Endothelial cell of umbilical vein (primary cell): ENCODE measurements at regions of chr7 and their contacts with region 1.

Region 1: GRCh38 chr7:11831736-11832495 is at the start of gene THSD7A:
- DNase-seq: peak; percentile 81
- H3K4me3 ChIP-seq: peak within 1 kb of the TSS; percentile 55 to 89 (median 66)
- H3K27ac ChIP-seq: peak within 1 kb of the TSS; percentile 84
- H3K4me1 ChIP-seq: peaks cover 12% of the 10 kb centered on the region
- H3K27me3 ChIP-seq: no peaks in the 10 kb centered on the region
- CTCF ChIP-seq: peak in 1 of 2 donors; percentile 7
- POLR2A ChIP-seq: no peak
- total RNA-seq, gene THSD7A: 12.7 and 15.2 TPM in 2 replicates

Region 2: DNA sequence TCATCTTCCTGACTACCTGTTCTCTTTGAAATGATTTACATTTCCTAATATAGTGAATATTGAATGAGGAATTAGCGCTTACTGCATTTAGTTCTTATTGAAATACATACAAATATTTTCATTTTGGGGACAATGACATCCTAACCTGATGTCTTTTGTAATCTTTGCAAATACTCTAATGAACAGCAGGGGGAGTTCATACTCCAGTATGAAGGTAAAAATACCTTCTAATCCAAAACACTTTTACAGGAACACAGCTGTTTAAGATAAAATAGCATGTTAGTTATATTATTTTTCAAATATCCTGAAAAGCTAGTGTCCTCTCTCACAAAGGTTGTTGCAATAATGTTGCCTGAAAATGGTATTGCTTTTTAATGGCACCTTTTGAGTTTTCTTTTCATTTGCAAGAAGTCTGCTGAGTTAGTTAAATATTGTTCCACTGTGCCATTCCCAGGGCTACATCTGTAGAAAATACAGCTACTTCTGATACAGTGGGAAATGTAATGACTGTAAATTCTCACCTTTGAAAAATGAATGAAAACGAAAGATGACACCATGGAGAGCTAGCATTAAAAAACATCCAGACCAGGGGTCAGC is 458.3 kb before region 1 on chr7:
- CTCF ChIA-PET with region 1: interaction called, 11 read pairs
- POLR2A ChIA-PET with region 1: no interaction called
- dilution Hi-C with region 1: no loop called
- intact Hi-C with region 1: loop called (anchors 1 kb)
- DNase-seq: peak; percentile 38
- H3K4me3 ChIP-seq: no peak overlapping the region
- H3K27ac ChIP-seq: no peak overlapping the region
- H3K4me1 ChIP-seq: no peaks in the 10 kb centered on the region
- H3K27me3 ChIP-seq: no peaks in the 10 kb centered on the region
- CTCF ChIP-seq: peak; percentile 16 to 29
- POLR2A ChIP-seq: no peak

Region 3: DNA sequence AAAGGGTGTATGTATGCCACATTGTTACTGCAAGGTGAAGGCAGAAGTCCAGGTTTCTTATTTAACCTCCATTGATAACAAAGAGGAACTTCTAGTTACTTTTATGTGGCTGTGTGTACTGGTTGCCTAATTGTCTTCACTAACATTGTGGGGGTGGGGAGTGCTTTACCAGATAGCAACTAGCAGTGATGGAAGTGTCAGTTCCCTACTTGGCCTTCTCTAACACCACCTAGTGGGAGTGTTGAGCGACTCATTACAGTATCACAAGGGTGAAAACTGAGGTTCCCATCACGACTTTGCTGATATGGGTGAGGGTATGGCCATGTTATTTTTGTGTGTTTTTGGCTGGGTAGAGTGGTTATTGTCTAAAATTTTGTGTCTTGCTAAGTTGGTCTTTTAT is 274.3 kb before region 1 on chr7:
- CTCF ChIA-PET with region 1: no interaction called
- POLR2A ChIA-PET with region 1: no interaction called
- dilution Hi-C with region 1: no loop called
- intact Hi-C with region 1: loop called (anchors 2 kb)
- DNase-seq: peak; percentile 37
- H3K4me3 ChIP-seq: no peak overlapping the region
- H3K27ac ChIP-seq: no peak overlapping the region
- H3K4me1 ChIP-seq: no peaks in the 10 kb centered on the region
- H3K27me3 ChIP-seq: no peaks in the 10 kb centered on the region
- CTCF ChIP-seq: peak; percentile 31 to 41
- POLR2A ChIP-seq: no peak

Region 4: GRCh38 chr7:11625669-11626068 is 206.2 kb before region 1 on chr7:
- CTCF ChIA-PET with region 1: no interaction called
- POLR2A ChIA-PET with region 1: no interaction called
- dilution Hi-C with region 1: no loop called
- intact Hi-C with region 1: loop called (anchors 5 kb)
- DNase-seq: peak; percentile 96
- H3K4me3 ChIP-seq: no peak overlapping the region
- H3K27ac ChIP-seq: peak overlapping the region; percentile 56
- H3K4me1 ChIP-seq: peaks cover 16% of the 10 kb centered on the region
- H3K27me3 ChIP-seq: no peaks in the 10 kb centered on the region
- CTCF ChIP-seq: no peak
- POLR2A ChIP-seq: no peak

Region 5: DNA sequence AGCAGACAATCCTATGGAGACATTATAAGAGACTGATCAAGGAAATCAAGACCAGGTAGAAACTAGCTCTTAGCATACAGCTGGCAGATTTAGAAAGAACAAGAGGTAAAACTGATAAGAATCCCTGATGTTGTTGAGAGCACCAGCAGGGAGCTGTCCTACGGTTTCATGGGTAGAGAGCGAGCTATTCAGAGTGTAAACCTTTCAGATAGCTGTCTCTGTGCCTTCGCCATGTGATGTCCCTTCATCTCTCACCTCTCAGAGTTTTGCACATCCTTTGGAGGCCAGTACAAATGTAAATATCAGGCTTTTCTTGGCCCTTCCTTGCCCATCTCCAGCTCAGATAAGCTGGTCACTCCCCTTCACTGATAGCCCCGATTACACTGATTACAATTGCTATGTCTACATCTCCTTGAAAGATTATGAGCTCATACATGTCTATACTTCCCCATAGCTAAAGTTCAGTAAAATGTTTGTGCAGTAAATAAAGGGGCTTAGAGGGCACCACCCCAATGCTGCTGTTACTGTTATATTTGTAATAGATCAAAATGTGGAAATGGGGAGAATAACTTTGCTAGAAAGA is 21.8 kb before region 1 on chr7:
- CTCF ChIA-PET with region 1: interaction called, 11 read pairs
- POLR2A ChIA-PET with region 1: no interaction called
- dilution Hi-C with region 1: no loop called
- intact Hi-C with region 1: no loop called
- DNase-seq: no peak
- H3K4me3 ChIP-seq: no peak overlapping the region
- H3K27ac ChIP-seq: no peak overlapping the region
- H3K4me1 ChIP-seq: no peaks in the 10 kb centered on the region
- H3K27me3 ChIP-seq: no peaks in the 10 kb centered on the region
- CTCF ChIP-seq: no peak
- POLR2A ChIP-seq: no peak

Region 6: GRCh38 chr7:12244129-12244528 is 412.2 kb after region 1 on chr7:
- CTCF ChIA-PET with region 1: interaction called, 10 read pairs
- POLR2A ChIA-PET with region 1: no interaction called
- dilution Hi-C with region 1: no loop called
- intact Hi-C with region 1: loop called (anchors 1 kb)
- DNase-seq: peak; percentile 36
- H3K4me3 ChIP-seq: no peak overlapping the region
- H3K27ac ChIP-seq: no peak overlapping the region
- H3K4me1 ChIP-seq: no peaks in the 10 kb centered on the region
- H3K27me3 ChIP-seq: no peaks in the 10 kb centered on the region
- CTCF ChIP-seq: peak; percentile 48 to 64
- POLR2A ChIP-seq: no peak

Region 7: DNA sequence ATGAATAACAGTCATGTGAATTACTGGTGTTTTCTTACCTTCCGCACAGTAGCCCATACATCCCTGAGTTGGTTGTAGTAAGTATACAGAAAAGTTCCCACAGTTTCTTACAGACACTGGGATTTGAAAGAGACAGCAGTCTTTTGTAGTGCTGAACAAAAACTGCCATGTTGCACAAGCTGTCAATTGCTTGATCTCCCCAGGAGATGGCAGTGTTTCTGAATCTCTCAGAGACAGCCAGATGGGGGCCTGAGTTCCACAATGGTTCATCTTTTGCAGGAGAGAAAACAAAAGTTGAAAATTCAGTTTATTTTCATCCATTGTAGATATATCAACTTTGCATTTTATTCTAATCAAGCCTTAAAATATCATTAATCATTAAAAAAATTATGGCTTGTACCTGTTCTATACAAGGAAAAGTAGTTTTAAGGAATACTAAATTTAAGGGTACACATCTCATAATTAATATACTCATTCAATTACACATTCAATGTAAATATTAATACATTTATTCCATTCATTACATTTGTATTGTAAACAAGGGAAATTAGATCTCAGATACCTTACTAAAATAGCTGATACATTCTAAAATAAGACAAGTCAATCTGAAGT is 557.3 kb after region 1 on chr7:
- CTCF ChIA-PET with region 1: interaction called, 4 read pairs
- POLR2A ChIA-PET with region 1: no interaction called
- dilution Hi-C with region 1: no loop called
- intact Hi-C with region 1: loop called (anchors 1 kb)
- DNase-seq: peak; percentile 59
- H3K4me3 ChIP-seq: no peak overlapping the region
- H3K27ac ChIP-seq: no peak overlapping the region
- H3K4me1 ChIP-seq: no peaks in the 10 kb centered on the region
- H3K27me3 ChIP-seq: no peaks in the 10 kb centered on the region
- CTCF ChIP-seq: peak; percentile 79
- POLR2A ChIP-seq: no peak